ENCODE measurements at regions of chr4 and their contacts with region 1.

Region 1: GRCh38 chr4:118034053-118034785 is at the start of gene NDST3:
- DNase-seq: peak; percentile 48 to 58
- H3K4me3 ChIP-seq: peak within 1 kb of the TSS; percentile 57; the same call in 1 of the 2 replicates
- H3K27ac ChIP-seq: no peak within 1 kb of the TSS
- H3K4me1 ChIP-seq: no peaks in the 10 kb centered on the region
- H3K27me3 ChIP-seq: no peaks in the 10 kb centered on the region
- CTCF ChIP-seq: peak; percentile 60
- total RNA-seq, gene NDST3: 0.15 TPM in 1 of 2 replicates, not detected in the other

Region 2: DNA sequence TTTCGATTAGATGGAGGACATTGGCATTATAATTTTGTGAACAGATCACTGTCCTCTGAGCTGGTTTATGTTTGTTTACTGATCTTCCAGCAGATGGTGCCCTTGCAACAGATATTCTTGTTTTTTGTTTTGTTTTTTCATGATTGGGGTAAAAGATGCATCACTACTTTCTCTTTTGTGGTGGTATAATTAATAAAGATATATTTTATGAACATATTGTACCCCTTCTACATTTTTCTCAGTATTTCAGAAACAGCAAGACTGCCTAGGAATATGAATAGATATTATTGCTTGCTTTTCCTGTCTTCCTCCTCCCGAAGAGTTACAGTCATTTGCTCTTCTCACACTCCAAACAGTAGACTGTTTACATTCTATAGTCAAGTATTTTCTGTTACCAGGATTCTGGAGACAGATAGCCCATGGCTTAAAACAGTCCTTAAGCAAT is 1854.0 kb before region 1 on chr4:
- CTCF ChIA-PET with region 1: no interaction called
- POLR2A ChIA-PET with region 1: no interaction called
- intact Hi-C with region 1: loop called (anchors 10 kb)
- DNase-seq: no peak
- H3K4me3 ChIP-seq: no peak overlapping the region
- H3K27ac ChIP-seq: no peak overlapping the region
- H3K4me1 ChIP-seq: no peaks in the 10 kb centered on the region
- H3K27me3 ChIP-seq: no peaks in the 10 kb centered on the region
- CTCF ChIP-seq: peak; percentile 59

Region 3: GRCh38 chr4:117474987-117475386 is 559.2 kb before region 1 on chr4:
- CTCF ChIA-PET with region 1: no interaction called
- POLR2A ChIA-PET with region 1: no interaction called
- intact Hi-C with region 1: no loop called
- DNase-seq: no peak
- H3K4me3 ChIP-seq: no peak overlapping the region
- H3K27ac ChIP-seq: no peak overlapping the region
- H3K4me1 ChIP-seq: no peaks in the 10 kb centered on the region
- H3K27me3 ChIP-seq: no peaks in the 10 kb centered on the region
- CTCF ChIP-seq: no peak

Region 4: GRCh38 chr4:117577686-117578311 is 456.4 kb before region 1 on chr4:
- CTCF ChIA-PET with region 1: no interaction called
- POLR2A ChIA-PET with region 1: no interaction called
- intact Hi-C with region 1: loop called (anchors 2 kb)
- DNase-seq: no peak
- H3K4me3 ChIP-seq: no peak overlapping the region
- H3K27ac ChIP-seq: no peak overlapping the region
- H3K4me1 ChIP-seq: no peaks in the 10 kb centered on the region
- H3K27me3 ChIP-seq: no peaks in the 10 kb centered on the region
- CTCF ChIP-seq: no peak